ENCODE measurements at regions of chr9 and their contacts with region 1.

Region 1: DNA sequence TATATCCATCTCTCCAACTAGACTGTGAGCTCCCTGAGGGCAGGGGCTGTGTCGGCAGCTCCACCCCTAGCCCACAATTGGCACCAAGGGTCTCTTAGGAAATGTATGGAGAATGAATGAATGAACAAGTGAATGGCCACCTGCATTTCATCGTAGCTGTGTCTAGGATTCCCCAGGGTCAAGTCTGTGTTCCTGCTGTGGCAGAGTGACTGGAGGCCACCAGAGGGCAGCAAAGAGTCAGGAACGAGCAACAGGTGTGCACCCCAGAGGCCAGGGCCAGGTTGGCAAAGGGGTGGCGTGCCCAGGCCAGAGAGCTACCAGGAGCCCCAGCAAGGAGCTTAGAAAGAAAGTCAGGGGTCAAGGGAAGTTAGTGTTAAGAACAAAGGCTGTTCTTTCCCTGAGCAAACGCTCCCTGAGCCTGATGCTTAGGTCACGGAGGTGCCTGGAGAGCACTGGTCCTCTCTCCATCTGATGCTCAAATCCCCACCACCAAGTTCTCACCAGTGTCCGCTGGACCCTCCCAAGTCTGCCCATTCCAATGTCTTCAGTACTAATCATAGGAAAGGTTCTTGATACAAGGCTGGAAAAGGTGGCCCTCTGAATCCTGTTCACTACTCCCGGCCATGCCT is 160.7 kb downstream of the PAX5 start:
- DNase-seq: peak; percentile 60 to 83
- ATAC-seq: peak; percentile 85

Region 2: DNA sequence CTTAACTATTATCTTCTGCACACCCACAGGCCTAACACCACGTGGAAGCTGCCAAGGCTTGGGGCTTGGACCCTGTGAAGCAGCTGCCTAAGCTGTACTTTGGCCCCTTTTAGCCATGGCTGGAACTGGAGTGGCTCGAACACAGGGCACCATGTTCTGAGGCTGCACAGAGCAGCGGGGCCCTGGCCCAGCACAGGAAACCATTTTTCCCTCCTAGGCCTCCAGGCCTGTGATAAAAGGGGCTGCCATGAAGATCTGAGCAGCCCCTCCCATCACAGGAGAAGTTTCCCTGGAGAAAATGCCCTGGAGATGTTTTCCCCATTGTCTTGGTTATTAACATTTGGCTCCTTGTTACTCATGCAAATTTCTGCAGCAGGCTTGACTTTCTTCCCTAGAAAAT is 174.4 kb before region 1 on chr9:
- intact Hi-C with region 1: no loop called
- DNase-seq: no peak
- ATAC-seq: no peak

Region 3: DNA sequence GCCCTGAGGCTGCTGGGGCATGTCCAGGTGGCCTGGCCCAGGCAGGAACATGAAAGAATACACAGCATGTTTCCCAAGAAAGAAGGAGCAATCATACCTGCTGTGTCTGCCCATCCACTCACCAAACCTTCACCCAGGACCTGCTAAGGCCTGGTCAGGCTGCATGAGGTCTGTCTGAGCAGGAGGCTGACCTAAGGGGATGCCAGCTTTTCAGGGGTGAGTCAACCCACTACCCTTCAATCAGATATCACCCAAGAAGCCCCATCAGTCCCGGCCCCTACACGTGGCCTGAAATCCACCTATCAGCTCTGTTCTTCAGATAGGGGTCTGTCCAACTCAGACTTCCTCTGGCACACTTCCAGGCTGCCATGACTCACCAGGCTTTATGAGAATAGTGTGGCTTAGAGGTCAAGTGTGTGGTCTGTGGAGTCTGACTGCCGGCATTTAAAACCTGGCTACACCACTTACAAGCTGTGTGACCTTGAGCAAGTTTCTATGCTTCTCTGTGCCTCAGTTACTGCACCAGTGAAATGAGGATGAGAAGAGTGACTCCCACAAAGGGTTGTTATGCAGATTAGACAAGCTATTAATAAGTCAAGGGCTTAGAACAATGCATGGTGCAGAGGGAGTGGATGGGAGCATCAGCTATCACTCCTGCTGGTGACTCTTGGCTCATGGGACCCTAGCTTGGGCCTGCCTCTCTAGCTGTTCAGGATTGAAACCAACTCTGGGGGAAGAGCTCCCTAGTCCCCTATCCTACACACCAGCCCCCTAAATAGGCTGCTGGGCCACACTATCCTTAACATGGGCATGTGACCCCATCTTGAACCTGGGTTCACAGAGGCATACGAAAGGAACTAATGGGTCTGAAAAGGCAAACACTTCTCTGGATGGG is 30.4 kb after region 1 on chr9:
- intact Hi-C with region 1: no loop called
- DNase-seq: peak in 1 of 2 donors; percentile 11
- ATAC-seq: no peak

Region 4: DNA sequence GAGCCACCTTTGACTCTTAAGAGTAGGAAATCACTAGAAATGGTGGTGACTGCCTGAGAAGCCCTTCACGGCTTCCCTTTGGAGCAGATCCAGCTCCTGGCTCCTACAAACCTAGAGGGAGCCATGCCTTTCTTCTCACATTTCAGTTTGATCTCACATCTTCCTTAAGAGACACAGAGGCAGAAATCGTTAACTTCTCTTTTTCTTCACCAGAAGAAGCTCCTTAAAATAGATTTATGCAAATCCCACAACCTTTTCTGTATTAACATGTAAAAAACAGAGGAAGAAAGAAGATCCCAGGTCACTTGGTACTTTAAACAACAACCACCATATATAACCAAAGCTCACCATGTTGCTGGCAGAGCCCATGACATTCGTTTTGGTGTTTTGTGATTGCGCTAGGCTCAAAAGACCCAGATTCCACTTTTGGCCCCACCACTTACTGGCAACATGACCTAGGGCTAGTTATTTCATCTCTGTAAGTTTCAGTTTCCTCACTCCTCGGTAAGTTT is 131.1 kb after region 1 on chr9:
- intact Hi-C with region 1: loop called in 1 of 2 experiments (anchors 10 kb)
- DNase-seq: no peak
- ATAC-seq: no peak